Lower leg skin (tissue), 4 donors: ENCODE measurements at regions of chr6 and their contacts with region 1.

Region 1: GRCh38 chr6:153625089-153625488 is 414.0 kb upstream of the OPRM1 start:
- DNase-seq: no peak
- H3K4me3 ChIP-seq: no peak overlapping the region
- CTCF ChIP-seq: no peak
- POLR2A ChIP-seq: no peak

Region 2: GRCh38 chr6:153424719-153425400 is 200.2 kb before region 1 on chr6:
- intact Hi-C with region 1: no loop called
- DNase-seq: no peak
- H3K4me3 ChIP-seq: no peak overlapping the region
- CTCF ChIP-seq: no peak
- POLR2A ChIP-seq: no peak

Region 3: DNA sequence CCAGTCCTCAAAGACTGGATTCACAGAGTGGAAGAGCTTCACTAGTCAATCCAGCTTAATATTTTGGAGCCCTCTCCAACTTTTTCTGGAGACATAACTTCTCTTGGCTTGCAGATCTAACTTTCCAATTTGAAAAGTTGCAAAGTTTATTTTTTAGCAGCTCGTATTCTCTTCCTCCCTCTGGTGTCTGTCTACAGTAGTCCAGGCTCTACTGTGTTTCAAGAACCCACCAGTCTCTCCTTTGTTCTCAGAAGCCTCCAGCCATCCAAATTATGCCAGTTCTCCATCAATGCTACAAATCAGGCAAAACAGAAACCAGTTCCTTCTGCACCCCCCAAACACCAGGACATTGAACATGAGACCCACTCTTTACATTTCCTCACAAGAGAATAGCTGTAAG is 37.9 kb after region 1 on chr6:
- intact Hi-C with region 1: loop called (anchors 1 kb)
- DNase-seq: no peak
- H3K4me3 ChIP-seq: no peak overlapping the region
- CTCF ChIP-seq: no peak
- POLR2A ChIP-seq: no peak